Posterior cingulate gyrus (tissue), 11 donors: ENCODE measurements at regions of chr2 and their contacts with region 1.

Region 1: GRCh38 chr2:11234309-11234708 is 79.0 kb downstream of the SLC66A3 start:
- DNase-seq: no peak

Region 2: GRCh38 chr2:11112870-11113452 is 121.3 kb before region 1 on chr2:
- intact Hi-C with region 1: no loop called
- DNase-seq: peak in 1 of 10 donors; percentile 9

Region 3: DNA sequence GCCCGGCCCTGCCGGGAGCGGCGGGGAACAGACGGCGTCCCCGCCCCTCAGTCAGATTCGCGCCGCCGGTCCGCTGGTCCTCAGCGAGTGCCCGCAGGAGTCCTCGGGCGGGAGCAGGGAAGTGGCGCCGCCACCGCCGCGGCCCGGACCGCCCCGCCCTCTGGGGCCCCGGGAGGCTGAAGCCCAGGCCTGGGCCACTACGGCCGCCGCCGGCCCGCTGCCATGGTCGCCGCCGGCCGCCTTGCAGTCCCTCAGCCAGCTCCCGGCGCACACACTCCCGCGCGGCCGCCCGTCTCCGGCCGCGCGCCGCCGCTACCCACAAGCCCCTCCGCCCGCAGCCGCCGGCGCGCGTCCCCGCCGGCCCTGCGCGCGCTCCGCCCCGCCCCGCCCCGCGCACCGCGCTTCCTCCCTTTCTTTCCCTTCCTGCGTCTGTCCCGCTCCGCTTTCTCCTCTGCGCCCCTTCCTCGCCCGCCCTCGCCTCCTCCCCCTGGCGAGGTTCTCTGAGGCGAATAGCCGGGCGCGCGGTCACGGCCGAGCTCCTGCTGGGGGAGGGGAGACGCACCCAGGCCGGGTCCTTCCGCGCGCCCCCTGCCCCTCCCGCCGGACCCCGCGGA is 110.1 kb after region 1 on chr2 and contains the start of gene ROCK2:
- intact Hi-C with region 1: loop called (anchors 10 kb)
- DNase-seq: peak; percentile 72 to 97 (median 82)

Region 4: DNA sequence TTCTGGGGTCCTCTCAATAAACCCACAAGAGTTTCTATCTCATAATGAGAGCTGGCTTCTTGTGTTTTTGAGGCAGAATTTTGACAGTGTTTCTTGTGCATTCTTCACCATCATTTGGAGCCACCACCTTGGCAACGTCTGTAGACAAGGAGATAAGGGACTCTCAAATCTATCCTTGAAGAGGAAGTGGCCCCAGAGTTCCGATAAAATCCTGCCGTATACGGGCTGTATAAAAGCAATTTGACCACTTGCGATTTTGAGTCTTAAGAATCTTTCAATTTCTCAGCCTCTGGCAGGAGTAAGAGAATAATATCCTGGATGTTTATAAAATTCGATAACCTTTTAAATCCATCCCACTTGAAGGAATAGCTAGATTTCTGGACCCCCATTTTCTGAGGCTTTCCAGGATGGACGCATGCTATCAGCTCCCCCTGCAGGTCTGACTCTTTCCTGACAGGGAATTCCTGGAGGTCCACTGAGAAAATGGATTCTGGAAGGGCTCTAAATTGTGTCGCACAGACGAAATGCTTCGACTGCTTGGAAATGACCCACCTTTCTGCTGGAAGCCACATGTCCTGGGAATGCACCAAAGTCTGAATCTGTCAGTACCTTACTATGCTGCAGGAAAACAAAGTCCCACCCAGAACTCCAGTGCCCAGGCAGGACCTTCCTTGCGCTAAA is 177.6 kb after region 1 on chr2:
- intact Hi-C with region 1: loop called (anchors 2 kb)
- DNase-seq: peak in 5 of 10 donors; percentile 37 to 84 (median 57)

Region 5: GRCh38 chr2:11446733-11447248 is 212.5 kb after region 1 on chr2:
- intact Hi-C with region 1: loop called (anchors 10 kb)
- DNase-seq: peak in 7 of 10 donors; percentile 29 to 89 (median 65)

Region 6: GRCh38 chr2:11583840-11584524 is 349.7 kb after region 1 on chr2:
- intact Hi-C with region 1: loop called (anchors 10 kb)
- DNase-seq: peak; percentile 75 to 98 (median 84)